ENCODE measurements at regions of chr1 and their contacts with region 1.

Region 1: DNA sequence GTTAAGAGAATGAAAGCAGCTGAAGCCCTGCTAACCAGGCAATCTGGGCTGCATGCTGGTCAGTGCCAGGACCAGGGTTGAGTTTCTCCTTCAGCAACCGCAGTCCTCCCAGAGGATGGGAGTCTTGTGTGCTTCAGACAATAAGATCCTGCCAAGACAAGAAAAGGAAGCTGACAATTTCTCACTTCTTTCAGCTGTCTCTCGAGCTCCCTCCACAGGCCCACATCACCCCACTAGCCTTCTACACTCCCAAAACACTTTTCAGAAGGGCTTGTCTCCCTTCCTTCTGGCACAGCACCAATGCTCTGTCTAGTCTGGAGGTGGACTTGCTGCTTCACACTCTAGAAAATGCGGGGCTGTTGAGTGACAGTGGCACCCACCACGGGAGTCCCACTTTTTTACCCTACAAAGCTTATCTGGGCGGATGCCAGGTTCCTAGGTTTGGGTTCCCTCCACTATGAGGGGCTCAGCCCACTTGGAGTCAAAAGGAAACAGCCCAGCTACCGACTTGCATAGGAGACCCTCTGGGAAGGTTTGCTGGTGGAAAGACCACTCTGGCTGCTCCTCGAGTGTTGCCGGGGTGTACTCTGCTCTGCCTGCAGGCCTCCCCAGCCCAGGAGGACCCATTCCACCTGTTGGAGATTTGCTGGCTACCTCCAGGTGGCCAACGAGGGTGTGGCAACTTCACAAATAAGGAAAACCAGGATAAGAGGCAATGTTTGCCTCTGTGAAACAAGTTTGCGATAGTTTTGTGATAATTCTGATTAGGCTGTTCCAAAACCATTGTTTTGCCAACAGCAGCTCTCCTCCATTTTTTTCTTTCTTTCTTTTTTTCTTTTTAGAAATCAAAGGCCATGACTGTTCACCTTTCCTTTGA is 68.9 kb downstream of the TENT5C start:
- DNase-seq: peak; percentile 45
- H3K4me3 Mint-ChIP-seq: no peak overlapping the region
- H3K27ac Mint-ChIP-seq: no peak overlapping the region
- H3K4me1 Mint-ChIP-seq: no peaks in the 10 kb centered on the region
- H3K27me3 Mint-ChIP-seq: peaks cover 10% of the 10 kb centered on the region
- CTCF ChIP-seq: no peak

Region 2: DNA sequence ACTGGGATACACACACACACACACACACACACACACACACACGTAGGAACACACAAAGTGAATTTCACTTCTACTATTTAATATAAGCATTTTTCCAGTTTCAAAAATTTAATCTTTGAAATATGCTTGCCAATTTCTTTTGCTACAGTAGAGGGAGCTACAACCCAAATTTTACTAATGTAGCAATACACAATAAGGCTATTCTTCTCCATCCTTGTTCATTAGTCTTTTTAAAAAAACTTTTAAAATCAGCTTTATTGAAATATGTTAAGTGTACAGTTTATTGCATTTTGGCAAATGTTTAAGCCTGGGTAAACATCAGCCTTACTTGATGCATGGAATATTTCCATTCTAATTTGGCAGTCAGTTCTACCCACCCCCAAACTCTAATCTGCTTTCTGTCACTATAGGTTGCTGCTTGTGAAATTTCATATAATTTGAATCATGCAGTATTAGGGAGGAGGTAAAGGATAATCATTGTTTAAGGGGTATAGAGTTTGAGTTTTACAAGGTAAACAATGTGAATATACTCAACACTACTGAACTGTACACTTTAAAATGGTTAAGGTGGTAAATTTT is 161.9 kb before region 1 on chr1:
- CTCF ChIA-PET with region 1: interaction called, 4 read pairs
- POLR2A ChIA-PET with region 1: no interaction called
- intact Hi-C with region 1: loop called (anchors 5 kb)
- DNase-seq: peak; percentile 32
- H3K4me3 Mint-ChIP-seq: no peak overlapping the region
- H3K27ac Mint-ChIP-seq: no peak overlapping the region
- H3K4me1 Mint-ChIP-seq: no peaks in the 10 kb centered on the region
- H3K27me3 Mint-ChIP-seq: no peaks in the 10 kb centered on the region
- CTCF ChIP-seq: peak; percentile 53

Measured in MCF 10A (cell line).